ENCODE measurements at regions of chr22 and their contacts with region 1.

Region 1: DNA sequence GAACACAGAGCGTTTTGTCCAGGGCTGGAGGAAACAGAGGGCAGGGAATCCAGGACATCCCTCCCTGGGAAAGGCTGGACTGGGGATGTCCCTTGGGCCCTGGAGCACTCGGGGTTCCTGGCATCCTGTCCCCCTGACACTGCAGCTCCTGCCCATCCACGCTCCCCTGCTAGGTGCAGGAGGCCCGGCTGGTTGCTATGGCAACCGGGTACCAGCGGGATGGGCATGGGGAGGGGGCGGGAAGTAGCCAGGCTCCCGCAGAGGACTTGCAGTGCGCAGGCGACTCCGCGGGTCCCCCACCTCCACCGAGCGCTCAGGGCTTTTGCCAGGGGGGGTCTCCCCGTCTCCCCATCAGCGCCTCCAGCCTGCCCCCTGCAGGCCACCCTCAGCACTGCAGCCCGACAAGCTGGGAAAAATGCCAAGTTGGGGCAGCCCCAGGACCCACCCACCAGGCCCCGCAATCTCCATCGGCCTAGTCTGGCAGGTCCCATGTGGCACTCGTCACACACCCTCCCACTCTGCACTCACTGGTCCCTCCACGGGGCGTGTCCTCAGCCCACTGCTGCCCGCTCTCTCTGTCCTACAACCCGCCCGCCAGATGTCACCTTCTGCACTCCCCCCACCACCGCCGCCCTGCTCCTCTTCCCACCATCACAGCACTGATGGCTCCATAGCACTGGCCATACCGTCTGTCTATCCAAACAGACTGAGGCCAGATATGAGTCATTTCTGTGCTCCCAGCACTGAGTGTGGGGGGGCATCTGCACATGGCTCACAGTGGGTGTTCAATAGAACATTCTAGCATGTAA is 31.5 kb downstream of the KIAA0930 start:
- DNase-seq: peak; percentile 50 to 91 (median 82)
- H3K4me3 ChIP-seq: peak overlapping the region in 58 of 59 donors; percentile 11 to 82 (median 69)
- H3K27ac ChIP-seq: peak overlapping the region; percentile 60 to 100 (median 96)
- H3K27me3 ChIP-seq: no peaks in the 10 kb centered on the region
- CTCF ChIP-seq: peak; percentile 49 to 94 (median 76)

Region 2: GRCh38 chr22:45225732-45226526 is 16.7 kb after region 1 on chr22:
- intact Hi-C with region 1: loop called (anchors 1 kb)
- DNase-seq: peak in 5 of 10 donors; percentile 61 to 73 (median 70)
- H3K4me3 ChIP-seq: peak overlapping the region in 5 of 59 donors; percentile 4 to 20 (median 13)
- H3K27ac ChIP-seq: peak overlapping the region; percentile 13 to 100 (median 97)
- H3K27me3 ChIP-seq: no peaks in the 10 kb centered on the region
- CTCF ChIP-seq: no peak

Region 3: GRCh38 chr22:45240810-45241631 is 31.8 kb after region 1 on chr22 and contains the start of gene KIAA0930:
- intact Hi-C with region 1: loop called (anchors 1 to 2 kb)
- DNase-seq: peak in 9 of 10 donors; percentile 51 to 80 (median 67)
- H3K4me3 ChIP-seq: peak within 1 kb of the TSS; percentile 55 to 92 (median 80)
- H3K27ac ChIP-seq: peak within 1 kb of the TSS in 55 of 59 donors; percentile 12 to 89 (median 69)
- H3K27me3 ChIP-seq: no peaks in the 10 kb centered on the region
- CTCF ChIP-seq: no peak
- total RNA-seq, gene KIAA0930: 174 to 603 (median 325) TPM

Region 4: DNA sequence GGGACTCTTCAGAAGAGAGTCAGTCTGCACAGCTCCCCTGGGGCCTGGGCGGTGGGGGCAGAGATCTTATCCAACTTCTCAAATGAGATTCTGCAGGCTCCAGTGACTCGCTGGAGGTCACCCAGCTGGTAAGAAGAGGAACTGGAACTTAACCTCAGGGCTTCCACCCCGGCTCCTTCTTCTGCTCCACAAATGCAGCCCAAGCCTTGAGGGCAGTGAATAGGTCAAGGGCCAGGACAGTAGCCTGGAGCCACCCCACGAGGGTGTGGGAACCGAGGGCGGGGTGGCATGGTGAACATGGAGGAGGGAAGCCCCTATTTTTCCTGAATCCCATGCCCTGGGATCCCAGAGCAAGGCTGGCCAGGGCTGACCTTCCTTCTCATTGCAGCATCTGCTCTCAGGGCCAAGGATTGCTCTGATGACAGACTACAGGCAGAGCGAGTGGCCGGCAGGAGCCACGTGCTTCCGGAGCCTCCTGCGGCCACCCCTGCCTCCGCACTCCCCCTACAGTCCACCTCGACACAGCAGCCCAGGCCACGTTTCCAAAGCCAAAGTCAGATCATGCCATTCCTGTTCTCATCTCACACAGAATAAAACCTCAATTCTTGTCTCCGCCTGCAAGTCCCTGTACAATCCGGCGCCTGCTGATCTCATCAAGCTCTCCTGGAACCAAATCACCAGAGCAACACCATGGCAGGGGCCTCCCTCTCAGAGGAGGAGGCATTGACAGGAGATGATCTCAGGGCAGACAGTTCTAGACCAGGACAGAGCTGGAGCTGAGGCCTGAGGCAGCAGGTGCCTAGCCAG is 54.5 kb after region 1 on chr22:
- intact Hi-C with region 1: loop called (anchors 2 to 10 kb)
- DNase-seq: peak in 9 of 10 donors; percentile 50 to 80 (median 63)
- H3K4me3 ChIP-seq: no peak overlapping the region
- H3K27ac ChIP-seq: peak overlapping the region in 40 of 59 donors; percentile 1 to 74 (median 52)
- H3K27me3 ChIP-seq: no peaks in the 10 kb centered on the region
- CTCF ChIP-seq: peak; percentile 42 to 91 (median 76)

Region 5: DNA sequence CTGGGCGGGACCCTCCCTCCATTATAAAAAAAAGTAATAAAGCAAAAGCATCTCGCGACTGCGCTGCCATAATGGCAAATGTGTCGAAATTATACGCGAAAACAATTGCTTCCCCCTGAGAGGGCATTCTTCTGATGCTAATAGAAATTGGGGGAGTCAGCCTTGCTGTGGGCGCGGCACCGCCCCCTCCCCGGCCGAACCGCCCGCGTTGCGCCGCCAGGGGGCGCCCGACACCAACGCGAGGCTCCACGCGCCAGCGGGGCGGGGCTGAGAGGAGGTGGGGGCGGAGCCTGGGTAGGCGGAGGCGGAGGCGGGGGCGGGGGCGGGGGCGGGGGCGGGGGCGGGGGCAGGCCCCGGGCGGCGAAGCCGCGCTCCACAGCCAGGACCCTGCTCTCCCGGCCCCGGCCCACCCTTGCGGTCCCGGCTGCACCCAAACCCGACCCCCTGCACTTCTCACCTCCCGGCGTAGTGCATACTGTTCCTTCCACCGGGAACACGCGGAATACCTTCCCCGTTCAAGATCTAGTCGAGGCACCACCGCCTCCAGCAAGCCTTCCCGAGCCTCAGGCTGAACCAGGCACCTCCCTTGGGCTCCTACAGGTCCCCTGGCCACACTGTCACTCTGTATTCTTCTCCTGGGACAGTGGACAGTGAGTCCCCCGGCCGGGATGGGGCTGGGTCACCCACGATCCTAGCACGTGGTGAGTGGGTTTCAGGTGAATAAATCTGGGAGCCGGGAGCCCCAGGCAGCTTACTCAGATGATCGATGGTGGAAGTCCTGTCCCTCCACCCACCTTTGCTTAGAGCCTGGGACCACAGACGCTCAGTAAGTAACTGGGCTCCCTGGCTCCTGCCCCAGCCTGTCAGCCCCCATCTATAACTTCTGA is 60.0 kb after region 1 on chr22:
- intact Hi-C with region 1: loop called in 1 of 2 experiments (anchors 10 kb)
- DNase-seq: peak in 9 of 10 donors; percentile 64 to 91 (median 77)
- H3K4me3 ChIP-seq: peak overlapping the region; percentile 26 to 80 (median 69)
- H3K27ac ChIP-seq: peak overlapping the region in 29 of 59 donors; percentile 2 to 75 (median 39)
- H3K27me3 ChIP-seq: no peaks in the 10 kb centered on the region
- CTCF ChIP-seq: peak; percentile 66 to 99 (median 90)